ENCODE measurements at regions of chr5 and their contacts with region 1.

Region 1: GRCh38 chr5:93273176-93273575 is 307.8 kb downstream of the NR2F1-AS1 start:
- DNase-seq: peak; percentile 55
- H3K4me3 ChIP-seq: no peak overlapping the region
- H3K27ac ChIP-seq: peak overlapping the region; percentile 99
- H3K4me1 ChIP-seq: peaks cover 30% of the 10 kb centered on the region
- H3K27me3 ChIP-seq: no peaks in the 10 kb centered on the region
- CTCF ChIP-seq: no peak
- POLR2A ChIP-seq: no peak

Region 2: GRCh38 chr5:93078082-93079038 is 194.8 kb before region 1 on chr5:
- CTCF ChIA-PET with region 1: no interaction called
- POLR2A ChIA-PET with region 1: no interaction called
- dilution Hi-C with region 1: no loop called
- intact Hi-C with region 1: loop called (anchors 1 kb)
- DNase-seq: peak; percentile 99
- H3K4me3 ChIP-seq: no peak overlapping the region
- H3K27ac ChIP-seq: peak overlapping the region; percentile 89
- H3K4me1 ChIP-seq: peaks cover 18% of the 10 kb centered on the region
- H3K27me3 ChIP-seq: no peaks in the 10 kb centered on the region
- CTCF ChIP-seq: no peak
- POLR2A ChIP-seq: peak; percentile 50

Region 3: GRCh38 chr5:93092349-93093105 is 180.6 kb before region 1 on chr5:
- CTCF ChIA-PET with region 1: interaction called, 8 read pairs
- POLR2A ChIA-PET with region 1: no interaction called
- dilution Hi-C with region 1: no loop called
- intact Hi-C with region 1: loop called (anchors 2 kb)
- DNase-seq: peak; percentile 82
- H3K4me3 ChIP-seq: no peak overlapping the region
- H3K27ac ChIP-seq: no peak overlapping the region
- H3K4me1 ChIP-seq: no peaks in the 10 kb centered on the region
- H3K27me3 ChIP-seq: no peaks in the 10 kb centered on the region
- CTCF ChIP-seq: peak; percentile 13 to 33
- POLR2A ChIP-seq: no peak

Region 4: DNA sequence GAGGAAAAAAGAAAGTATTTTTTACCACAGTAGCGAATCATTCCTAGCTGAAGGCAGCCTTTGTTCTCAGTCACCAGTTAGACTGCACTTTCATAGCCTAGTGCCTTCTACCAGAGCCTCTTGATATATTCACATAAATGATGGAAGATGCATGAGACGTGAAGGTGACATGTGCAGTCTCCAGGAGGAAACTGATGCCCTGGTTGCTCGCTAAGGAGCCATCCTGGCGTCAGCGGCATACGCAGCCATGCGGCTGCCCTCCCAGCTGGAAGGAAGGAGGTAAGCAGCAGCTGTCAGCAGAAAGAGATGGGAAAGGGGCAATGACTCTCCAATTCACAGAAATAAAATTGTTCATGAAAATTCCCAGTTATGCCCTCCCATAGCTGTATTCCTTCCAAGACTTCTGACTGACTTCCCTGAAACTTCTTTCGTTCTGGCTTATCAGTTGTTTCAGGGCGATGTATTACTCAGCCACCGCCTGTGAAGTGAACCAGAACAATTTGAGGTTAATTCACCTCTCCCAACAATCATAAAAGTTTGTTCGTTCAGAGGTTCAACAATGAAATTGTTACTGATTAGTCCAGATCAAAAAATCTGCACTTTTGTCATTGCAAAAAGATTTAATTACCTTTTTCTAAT is 23.4 kb before region 1 on chr5:
- CTCF ChIA-PET with region 1: interaction called, 10 read pairs
- POLR2A ChIA-PET with region 1: no interaction called
- dilution Hi-C with region 1: no loop called
- intact Hi-C with region 1: loop called (anchors 2 kb)
- DNase-seq: peak; percentile 87
- H3K4me3 ChIP-seq: peak overlapping the region in 2 of 3 experiments; percentile 14 to 58
- H3K27ac ChIP-seq: peak overlapping the region; percentile 88
- H3K4me1 ChIP-seq: peaks cover 26% of the 10 kb centered on the region
- H3K27me3 ChIP-seq: no peaks in the 10 kb centered on the region
- CTCF ChIP-seq: no peak
- POLR2A ChIP-seq: peak; percentile 57

Region 5: DNA sequence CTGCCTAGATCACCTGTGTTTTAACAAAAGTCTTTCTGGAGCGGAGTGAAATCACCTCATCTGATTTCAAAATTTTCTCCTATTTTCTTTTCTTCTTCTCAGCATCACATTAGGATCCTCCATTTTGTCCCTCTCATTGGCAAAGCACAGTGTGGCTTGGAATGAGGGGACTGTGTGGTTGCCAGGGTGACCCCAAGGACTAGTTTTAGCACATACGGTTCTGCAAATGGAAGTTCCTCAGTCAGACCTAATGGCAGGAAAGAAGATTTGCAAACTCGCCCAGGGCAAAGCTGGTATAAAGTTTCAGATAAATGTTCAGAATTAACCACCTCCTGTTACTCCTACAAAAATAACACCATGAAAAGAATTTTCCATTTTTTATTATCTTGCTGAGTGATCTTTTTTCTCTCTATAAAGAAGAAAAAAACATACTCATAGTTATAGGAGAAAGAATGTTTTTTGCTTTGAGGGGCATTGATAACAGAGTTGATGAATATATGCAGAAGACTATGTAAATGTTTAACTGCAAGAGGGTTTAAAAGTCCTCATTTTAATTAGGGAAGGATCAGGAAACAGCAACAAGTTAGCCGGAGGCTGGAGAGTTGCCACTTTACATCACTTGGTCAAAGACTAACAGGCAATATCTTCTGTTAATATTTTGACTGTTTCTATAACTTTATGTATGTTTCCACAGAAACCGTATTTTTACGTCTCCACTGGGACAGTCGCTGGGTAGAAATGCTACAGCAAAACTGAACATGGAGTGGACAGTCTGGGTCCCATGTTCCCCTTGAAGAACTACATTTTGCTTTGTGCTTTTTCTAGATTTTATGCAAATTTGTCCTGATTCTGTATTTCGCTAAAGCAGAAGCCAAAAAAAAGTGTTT is 50.0 kb after region 1 on chr5:
- CTCF ChIA-PET with region 1: no interaction called
- POLR2A ChIA-PET with region 1: no interaction called
- dilution Hi-C with region 1: no loop called
- intact Hi-C with region 1: no loop called
- DNase-seq: no peak
- H3K4me3 ChIP-seq: no peak overlapping the region
- H3K27ac ChIP-seq: no peak overlapping the region
- H3K4me1 ChIP-seq: no peaks in the 10 kb centered on the region
- H3K27me3 ChIP-seq: no peaks in the 10 kb centered on the region
- CTCF ChIP-seq: no peak
- POLR2A ChIP-seq: no peak

Region 6: DNA sequence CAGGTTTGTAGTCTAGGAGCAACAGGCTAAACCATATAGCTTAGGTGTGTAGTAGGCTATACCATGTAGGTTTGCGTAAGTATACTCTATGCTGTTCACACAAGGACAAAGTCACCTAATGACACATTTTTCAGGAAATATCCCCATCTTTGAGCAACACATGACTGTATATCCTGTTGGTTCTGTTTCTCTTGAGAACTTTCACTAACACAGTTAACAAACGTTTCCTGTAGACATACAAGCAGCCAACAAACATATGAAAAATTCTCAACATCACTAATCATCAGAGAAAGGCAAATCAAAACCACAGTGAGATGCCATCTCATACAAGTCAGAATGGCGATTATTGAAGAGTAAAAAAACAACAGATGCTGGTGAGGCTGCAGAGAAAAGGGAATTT is 239.6 kb after region 1 on chr5:
- CTCF ChIA-PET with region 1: no interaction called
- POLR2A ChIA-PET with region 1: no interaction called
- dilution Hi-C with region 1: no loop called
- intact Hi-C with region 1: loop called (anchors 1 kb)
- DNase-seq: peak; percentile 95
- H3K4me3 ChIP-seq: no peak overlapping the region
- H3K27ac ChIP-seq: peak overlapping the region; percentile 86
- H3K4me1 ChIP-seq: peaks cover 25% of the 10 kb centered on the region
- H3K27me3 ChIP-seq: no peaks in the 10 kb centered on the region
- CTCF ChIP-seq: no peak
- POLR2A ChIP-seq: no peak